BJ (cell line): ENCODE measurements at regions of chr4 and their contacts with region 1.

Region 1: DNA sequence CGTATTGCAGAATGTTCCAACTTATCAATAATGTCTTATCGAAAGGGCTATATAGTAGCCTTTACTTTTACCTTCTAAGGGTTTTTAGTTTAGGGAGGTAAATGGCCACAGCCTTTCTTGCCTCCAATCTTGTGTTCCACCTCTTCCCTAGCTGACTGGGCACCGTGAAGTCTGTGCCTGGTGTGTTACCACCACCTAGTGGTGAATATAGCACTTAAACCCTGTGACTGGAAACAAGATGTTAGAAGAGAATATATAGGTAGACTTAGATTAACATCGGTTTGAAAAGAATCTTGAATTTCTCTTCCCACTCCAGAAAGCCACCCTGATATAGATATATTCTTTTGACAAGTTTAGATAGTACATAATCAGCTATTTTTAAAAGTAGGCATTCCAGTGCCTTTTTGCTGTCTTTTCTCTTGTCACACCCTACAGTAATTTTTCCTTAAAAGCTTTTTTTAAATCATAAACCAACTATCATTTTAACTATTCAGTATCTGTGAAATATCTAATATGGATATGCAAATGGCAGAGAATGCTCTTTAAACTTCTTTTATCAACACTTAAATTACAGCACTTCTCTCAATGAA is 27.8 kb upstream of the ADH7 start:
- DNase-seq: no peak
- H3K4me3 ChIP-seq: no peak overlapping the region
- H3K27me3 ChIP-seq: no peaks in the 10 kb centered on the region
- CTCF ChIP-seq: peak; percentile 76

Region 2: GRCh38 chr4:99117876-99118693 is 344.9 kb before region 1 on chr4:
- CTCF ChIA-PET with region 1: interaction called, 10 read pairs
- POLR2A ChIA-PET with region 1: no interaction called
- DNase-seq: no peak
- H3K4me3 ChIP-seq: no peak overlapping the region
- H3K27me3 ChIP-seq: no peaks in the 10 kb centered on the region
- CTCF ChIP-seq: peak; percentile 10; the same call in 1 of the 2 replicates

Region 3: GRCh38 chr4:99447079-99447478 is 15.9 kb before region 1 on chr4:
- CTCF ChIA-PET with region 1: interaction called, 11 read pairs
- POLR2A ChIA-PET with region 1: no interaction called
- DNase-seq: no peak
- H3K4me3 ChIP-seq: no peak overlapping the region
- H3K27me3 ChIP-seq: no peaks in the 10 kb centered on the region; the same call in 1 of the 2 replicates
- CTCF ChIP-seq: no peak

Region 4: DNA sequence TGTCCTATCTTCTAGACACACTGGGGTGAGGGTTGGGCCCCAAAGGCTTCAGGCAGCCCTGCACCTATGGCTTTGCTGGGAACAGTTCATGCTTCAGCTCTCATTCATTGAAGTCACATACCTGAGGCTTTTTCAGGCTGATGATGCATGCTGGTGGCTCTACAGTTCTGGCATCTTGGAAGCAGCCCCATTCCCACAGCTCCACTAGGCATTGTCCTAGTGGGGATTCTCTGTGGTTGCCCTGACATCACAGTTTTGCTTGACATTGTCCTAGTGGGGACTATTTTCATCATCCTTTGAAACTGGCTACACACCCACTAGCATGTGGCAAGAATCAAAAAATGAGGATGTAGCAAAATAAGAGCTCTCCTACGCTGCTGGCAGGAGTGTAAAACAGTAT is 10.2 kb after region 1 on chr4:
- CTCF ChIA-PET with region 1: interaction called, 10 read pairs
- POLR2A ChIA-PET with region 1: no interaction called
- DNase-seq: no peak
- H3K4me3 ChIP-seq: no peak overlapping the region
- H3K27me3 ChIP-seq: peaks cover 3% of the 10 kb centered on the region; the same call in 1 of the 2 replicates
- CTCF ChIP-seq: no peak

Region 5: GRCh38 chr4:99593781-99594636 is 131.0 kb after region 1 on chr4:
- CTCF ChIA-PET with region 1: no interaction called
- POLR2A ChIA-PET with region 1: no interaction called
- DNase-seq: no peak
- H3K4me3 ChIP-seq: no peak overlapping the region
- H3K27me3 ChIP-seq: no peaks in the 10 kb centered on the region
- CTCF ChIP-seq: no peak

Region 6: DNA sequence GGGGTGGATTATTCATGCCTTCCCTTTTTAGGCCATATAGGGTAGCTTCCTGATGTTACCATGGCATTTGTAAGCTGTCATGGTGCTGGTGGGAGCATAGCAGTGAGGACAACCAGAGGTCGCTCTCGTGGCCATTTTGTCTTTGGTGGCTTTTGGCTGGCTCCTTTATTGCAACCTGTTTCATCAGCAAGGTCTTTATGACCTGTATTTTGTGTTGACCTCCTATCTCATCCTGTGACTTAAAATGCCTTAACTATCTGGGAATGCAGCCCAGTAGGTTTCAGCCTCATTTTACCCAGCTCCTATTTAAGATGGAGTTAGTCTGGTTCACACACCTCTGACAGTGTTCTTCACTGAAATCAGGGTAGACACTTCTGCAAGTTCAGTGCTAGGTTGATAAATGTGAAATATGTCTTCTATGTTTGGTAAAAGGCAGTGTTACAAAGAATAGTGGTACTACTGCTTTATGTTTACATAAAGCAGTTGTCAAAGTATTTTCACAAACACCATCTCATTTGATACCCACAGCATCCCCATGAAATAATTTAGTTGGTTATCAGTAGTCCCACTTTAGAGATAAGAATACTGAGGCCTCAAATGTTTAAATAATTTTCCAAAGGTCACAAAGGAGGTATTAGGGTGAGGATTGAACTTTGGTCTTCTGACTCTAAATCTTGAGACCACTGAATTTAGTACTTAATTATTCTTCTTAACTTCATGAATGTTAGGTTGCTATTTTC is 271.8 kb after region 1 on chr4:
- CTCF ChIA-PET with region 1: no interaction called
- POLR2A ChIA-PET with region 1: no interaction called
- DNase-seq: no peak
- H3K4me3 ChIP-seq: no peak overlapping the region
- H3K27me3 ChIP-seq: no peaks in the 10 kb centered on the region
- CTCF ChIP-seq: no peak